ENCODE measurements at regions of chr19 and their contacts with region 1.

Region 1: GRCh38 chr19:46487802-46488445 is 7.7 kb downstream of the PNMA8B start:
- DNase-seq: no peak
- H3K4me3 ChIP-seq: peak overlapping the region; percentile 47
- CTCF ChIP-seq: peak; percentile 95

Region 2: DNA sequence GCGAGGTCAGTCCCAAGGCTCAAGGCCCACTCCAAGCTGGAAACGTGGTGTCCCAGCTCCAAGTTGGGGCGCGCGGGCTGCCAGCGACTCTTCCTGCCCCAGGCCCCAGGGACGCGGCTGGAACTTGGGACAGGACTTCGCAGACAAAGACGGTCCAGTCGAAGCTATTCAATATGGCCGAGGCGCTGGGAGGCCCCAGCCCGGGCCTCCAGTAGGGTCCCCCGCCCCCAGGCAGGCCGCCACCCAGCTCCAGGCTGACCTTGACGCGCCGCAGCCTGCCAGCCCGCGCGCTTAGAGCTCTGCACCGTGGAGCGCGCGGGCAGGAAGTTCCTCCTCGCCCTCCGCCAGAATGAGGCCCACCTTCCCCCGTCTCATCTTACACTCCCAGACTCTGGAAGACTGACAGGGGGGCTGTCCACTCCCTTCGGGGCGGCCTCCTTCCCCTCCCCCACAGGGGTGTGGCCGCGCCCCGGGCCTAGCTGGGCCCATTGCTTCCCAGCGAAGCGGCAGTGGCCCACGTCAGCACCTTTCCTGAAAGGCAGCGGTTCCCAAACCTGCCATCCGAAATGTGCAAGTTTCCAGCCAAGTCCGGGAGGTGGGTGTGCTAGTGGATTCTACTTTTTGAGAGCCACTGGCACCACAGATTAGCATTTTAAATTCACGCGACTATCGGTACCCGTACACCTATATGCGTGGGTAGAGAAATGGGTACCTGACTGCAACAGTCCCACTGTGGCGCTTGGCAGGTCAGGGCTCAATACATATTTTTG is 74.5 kb before region 1 on chr19 and contains the start of gene CCDC8:
- CTCF ChIA-PET with region 1: interaction called, 257 read pairs
- POLR2A ChIA-PET with region 1: interaction called, 3 read pairs
- DNase-seq: peak; percentile 69
- H3K4me3 ChIP-seq: peak within 1 kb of the TSS; percentile 76
- CTCF ChIP-seq: no peak

Region 3: GRCh38 chr19:46503848-46504453 is 16.0 kb after region 1 on chr19:
- CTCF ChIA-PET with region 1: interaction called, 12 read pairs
- POLR2A ChIA-PET with region 1: no interaction called
- DNase-seq: no peak
- H3K4me3 ChIP-seq: no peak overlapping the region
- CTCF ChIP-seq: no peak

Region 4: DNA sequence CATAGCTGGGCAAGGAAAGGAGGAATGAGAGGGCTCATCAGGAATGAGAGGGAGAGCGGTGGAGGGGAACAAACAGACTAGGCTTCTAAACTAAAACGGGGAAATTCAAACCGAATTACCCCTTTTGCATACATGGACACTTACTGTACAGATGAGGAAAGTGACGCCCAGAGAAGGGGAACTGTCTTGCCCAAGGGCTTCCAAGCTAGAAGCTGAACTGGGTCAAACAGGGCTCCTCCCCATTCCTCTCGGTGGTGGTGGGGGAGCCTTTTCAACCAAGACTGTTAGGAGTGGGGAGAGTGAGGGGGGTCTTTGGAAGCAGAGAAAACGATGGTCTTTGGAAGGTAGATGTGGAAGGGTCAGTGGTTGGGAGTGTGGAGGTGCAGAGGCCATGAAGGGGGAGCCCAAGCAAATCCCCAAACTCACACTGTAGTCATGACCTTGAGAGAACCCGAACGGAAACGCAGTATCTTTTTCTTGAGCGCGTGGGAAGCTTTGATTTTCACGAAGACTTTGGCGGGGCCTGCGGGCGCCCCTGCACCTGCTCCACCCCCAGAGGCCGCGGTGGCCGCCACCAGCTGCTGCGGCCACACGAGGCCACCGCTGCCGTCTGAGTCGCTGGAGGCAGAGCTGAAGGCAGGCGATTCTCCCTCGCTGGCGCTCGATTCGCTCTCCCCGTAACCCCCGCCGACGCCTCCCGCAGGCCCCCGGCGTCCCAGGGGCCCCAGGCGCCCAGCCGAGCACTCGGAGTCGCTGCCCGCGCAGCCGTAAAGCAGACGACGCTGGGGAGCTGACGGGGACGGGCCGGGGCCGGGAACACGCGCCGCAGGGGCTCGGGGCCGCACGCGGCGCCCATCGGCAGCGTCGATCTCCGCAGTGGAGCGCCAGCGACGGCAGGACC is 160.4 kb after region 1 on chr19:
- CTCF ChIA-PET with region 1: no interaction called
- POLR2A ChIA-PET with region 1: no interaction called
- DNase-seq: no peak
- H3K4me3 ChIP-seq: no peak overlapping the region
- CTCF ChIP-seq: no peak